ENCODE measurements at regions of chr3 and their contacts with region 1.

Region 1: DNA sequence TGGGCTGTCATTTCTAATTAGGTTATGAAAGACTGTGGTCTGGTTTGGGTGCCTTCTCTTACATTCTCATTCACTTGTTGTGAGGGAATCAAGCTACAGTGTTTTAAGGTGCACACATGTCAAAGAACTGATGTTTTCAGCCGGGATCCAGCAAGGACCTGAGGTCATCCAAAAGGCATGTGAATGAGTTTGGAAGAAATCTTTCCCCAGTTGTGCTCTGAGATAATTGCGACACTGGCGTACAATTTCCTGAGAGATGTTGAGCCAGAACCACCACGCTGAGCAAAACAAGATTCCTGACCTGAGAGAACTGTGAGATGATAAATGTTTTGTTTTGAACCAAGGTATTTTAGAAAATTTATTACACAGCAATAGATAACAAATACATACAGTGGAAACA is 295.3 kb upstream of the SLITRK3 start:
- DNase-seq: no peak
- ATAC-seq: peak in 3 of 8 donors; percentile 46 to 77 (median 57)
- H3K4me3 ChIP-seq: no peak overlapping the region
- H3K27ac ChIP-seq: no peak overlapping the region
- H3K4me1 ChIP-seq: no peaks in the 10 kb centered on the region
- H3K27me3 ChIP-seq: no peaks in the 10 kb centered on the region
- CTCF ChIP-seq: no peak

Region 2: DNA sequence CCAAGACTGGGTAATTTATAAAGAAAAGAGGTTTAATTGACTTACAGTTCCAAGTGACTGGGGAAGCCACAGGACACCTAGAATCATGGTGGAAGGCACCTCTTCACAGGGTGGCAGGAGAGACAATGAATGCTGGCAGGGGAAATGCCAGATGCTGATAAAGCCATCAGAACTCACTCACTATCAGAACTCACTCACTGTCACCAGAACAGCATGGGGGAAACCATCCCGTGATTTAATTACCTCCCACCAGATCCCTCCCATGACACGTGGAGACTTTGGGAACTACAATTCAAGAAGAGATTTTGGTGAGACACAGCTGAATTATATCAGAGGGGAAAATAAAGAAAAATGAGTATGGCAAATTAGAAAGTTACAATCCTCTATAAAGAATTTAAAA is 34.9 kb after region 1 on chr3:
- intact Hi-C with region 1: loop called in 1 of 10 experiments (anchors 2 kb)
- DNase-seq: no peak
- ATAC-seq: no peak
- H3K4me3 ChIP-seq: no peak overlapping the region
- H3K27ac ChIP-seq: no peak overlapping the region
- H3K4me1 ChIP-seq: no peaks in the 10 kb centered on the region
- H3K27me3 ChIP-seq: no peaks in the 10 kb centered on the region
- CTCF ChIP-seq: no peak